ENCODE measurements at regions of chr11 and their contacts with region 1.

Region 1: DNA sequence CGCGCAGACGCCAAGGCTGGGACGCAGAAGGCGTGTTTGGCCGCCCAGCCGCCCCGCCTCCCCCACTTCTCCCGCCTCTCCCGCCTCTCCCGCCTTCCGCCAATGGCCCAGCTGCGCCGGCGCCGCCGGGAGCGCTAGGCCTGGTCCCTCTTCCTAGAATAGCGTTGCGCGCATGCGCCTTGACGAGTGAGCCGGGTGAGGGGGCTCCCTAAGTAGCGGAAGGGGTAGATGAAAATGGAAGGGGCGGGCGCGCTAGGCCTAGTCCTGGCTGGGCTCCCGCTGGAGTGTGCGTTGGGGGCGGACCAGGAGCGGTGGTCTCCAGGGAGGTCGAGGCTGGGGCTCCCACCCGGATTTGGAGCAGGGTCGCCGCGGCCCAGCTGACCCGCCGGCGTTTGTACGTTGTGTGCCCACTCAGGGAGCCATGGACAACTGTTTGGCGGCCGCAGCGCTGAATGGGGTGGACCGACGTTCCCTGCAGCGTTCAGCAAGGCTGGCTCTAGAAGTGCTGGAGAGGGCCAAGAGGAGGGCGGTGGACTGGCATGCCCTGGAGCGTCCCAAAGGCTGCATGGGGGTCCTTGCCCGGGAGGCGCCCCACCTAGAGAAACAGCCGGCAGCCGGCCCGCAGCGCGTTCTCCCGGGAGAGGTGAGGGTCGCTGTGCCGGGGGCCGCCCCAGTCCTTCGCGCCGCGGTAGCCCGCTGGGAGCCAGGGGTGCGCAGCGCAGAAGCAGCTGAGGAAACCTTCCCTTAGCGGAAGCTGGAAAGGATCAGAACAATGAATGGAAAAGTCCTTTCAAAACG is at the start of gene AKIP1:
- DNase-seq: peak; percentile 70
- ATAC-seq: peak; percentile 77
- H3K4me3 Mint-ChIP-seq: peak within 1 kb of the TSS; percentile 89
- H3K27ac Mint-ChIP-seq: peak within 1 kb of the TSS; percentile 59
- H3K4me1 Mint-ChIP-seq: peaks cover 37% of the 10 kb centered on the region
- H3K27me3 Mint-ChIP-seq: no peaks in the 10 kb centered on the region
- CTCF ChIP-seq: no peak
- total RNA-seq, gene AKIP1: 7.1 and 9.0 TPM in 2 replicates

Region 2: GRCh38 chr11:8777907-8778767 is 133.1 kb before region 1 on chr11:
- CTCF ChIA-PET with region 1: no interaction called
- POLR2A ChIA-PET with region 1: no interaction called
- intact Hi-C with region 1: no loop called
- DNase-seq: no peak
- ATAC-seq: peak; percentile 21
- H3K4me3 Mint-ChIP-seq: no peak overlapping the region
- H3K27ac Mint-ChIP-seq: no peak overlapping the region
- H3K4me1 Mint-ChIP-seq: peaks cover 2% of the 10 kb centered on the region
- H3K27me3 Mint-ChIP-seq: peaks cover 10% of the 10 kb centered on the region
- CTCF ChIP-seq: no peak

Region 3: DNA sequence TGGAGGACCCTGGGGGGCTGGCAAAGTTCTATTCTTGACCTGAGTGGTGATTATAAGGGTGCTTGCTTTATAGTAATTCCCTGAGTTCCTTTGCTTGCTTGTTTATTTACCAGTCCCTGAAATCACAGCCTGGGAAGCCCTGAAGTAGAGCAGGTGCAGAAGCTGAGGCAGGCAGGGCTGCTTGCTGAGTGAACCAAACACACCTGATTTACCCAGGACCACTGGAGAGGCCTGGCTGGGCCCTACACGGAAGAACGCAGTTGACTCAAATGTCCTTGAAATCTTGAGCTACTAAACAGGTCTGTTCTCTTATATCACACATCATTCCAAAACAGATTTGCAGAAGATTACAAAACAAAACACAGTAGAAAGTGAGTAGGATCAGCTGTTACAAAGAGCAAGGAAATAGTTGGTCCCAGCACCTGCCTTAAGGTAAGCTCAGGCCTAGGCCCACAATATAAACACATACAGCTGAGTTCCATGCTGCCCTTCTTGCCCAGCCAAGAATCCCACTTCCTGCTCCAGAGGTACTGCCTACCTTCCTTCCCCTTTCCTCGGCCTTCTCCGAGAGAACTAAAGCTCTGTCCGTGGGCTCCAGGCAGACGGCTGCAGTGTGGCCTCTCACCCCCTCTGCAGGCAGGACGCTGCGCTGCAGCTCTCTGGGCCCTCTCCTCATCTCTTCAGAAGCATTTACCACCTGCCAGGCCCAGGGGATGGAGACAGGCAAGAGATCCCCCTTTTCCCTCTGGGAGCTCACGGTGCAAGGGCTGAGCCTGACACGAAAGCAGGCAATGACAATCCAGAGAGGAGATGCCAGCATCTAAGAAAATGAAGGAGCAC is 226.3 kb after region 1 on chr11:
- CTCF ChIA-PET with region 1: interaction called, 16 read pairs
- POLR2A ChIA-PET with region 1: no interaction called
- intact Hi-C with region 1: loop called (anchors 1 kb)
- DNase-seq: peak; percentile 60
- ATAC-seq: peak; percentile 99
- H3K4me3 Mint-ChIP-seq: no peak overlapping the region
- H3K27ac Mint-ChIP-seq: no peak overlapping the region
- H3K4me1 Mint-ChIP-seq: peaks cover 3% of the 10 kb centered on the region
- H3K27me3 Mint-ChIP-seq: no peaks in the 10 kb centered on the region
- CTCF ChIP-seq: peak; percentile 50

Region 4: DNA sequence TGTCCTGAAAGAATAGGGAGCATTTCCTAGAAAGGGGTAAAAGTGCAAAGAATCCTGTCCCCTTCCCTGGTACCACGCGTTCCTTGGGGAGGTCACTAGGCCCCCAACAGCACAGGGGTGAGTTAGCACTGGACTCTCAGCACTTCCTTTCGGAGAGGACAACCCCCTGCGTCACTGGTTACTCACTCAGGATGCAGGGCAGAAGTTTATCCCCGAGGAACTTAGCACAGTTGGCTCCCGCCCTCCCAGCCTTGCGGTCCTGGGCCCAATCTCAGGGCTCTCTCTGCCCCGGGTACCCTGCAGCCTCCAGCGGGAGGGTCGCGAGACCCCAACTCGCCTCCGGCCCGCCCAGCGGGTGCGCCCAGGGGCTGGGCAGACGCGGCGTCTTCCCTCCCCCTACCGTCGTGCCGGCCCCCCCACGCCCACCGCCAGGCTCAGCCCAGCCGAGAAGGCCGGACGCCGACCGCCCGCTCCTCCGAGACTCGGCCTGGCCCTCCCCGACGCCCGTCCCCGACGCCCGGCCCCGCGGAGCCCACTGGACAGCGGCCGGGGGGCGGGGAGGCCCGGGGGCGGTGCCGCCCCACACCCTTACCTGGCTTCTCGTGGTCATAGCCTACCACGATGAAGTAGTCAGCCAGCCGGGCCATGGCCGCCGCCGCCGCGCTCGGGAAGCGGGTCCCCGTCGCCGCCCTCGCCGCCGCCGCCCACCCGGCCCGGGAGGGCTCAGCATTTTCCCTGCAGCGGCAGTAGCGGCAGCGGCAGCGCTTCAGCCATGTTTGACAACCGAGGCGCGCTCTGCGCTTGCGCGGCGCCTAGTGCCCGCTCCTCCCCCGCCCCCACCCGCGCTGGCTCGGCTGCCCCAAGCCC is 1382.4 kb after region 1 on chr11 and contains the start of gene SBF2:
- CTCF ChIA-PET with region 1: no interaction called
- POLR2A ChIA-PET with region 1: no interaction called
- intact Hi-C with region 1: loop called (anchors 5 kb)
- DNase-seq: peak; percentile 78
- ATAC-seq: peak; percentile 66
- H3K4me3 Mint-ChIP-seq: peak within 1 kb of the TSS; percentile 81
- H3K27ac Mint-ChIP-seq: no peak within 1 kb of the TSS
- H3K4me1 Mint-ChIP-seq: peaks cover 27% of the 10 kb centered on the region
- H3K27me3 Mint-ChIP-seq: peaks cover 29% of the 10 kb centered on the region
- CTCF ChIP-seq: no peak
- total RNA-seq, gene SBF2: 7.9 and 12.0 TPM in 2 replicates